CD8-positive, alpha-beta T cell (primary cell): ENCODE measurements at regions of chr1 and their contacts with region 1.

Region 1: GRCh38 chr1:212477014-212477679 is 44.4 kb downstream of the NENF start:
- DNase-seq: peak; percentile 50 to 87 (median 75)
- ATAC-seq: peak; percentile 96
- H3K4me3 ChIP-seq: no peak overlapping the region
- H3K4me3 Mint-ChIP-seq: peak overlapping the region; percentile 18
- H3K27ac ChIP-seq: no peak overlapping the region
- H3K27ac Mint-ChIP-seq: no peak overlapping the region
- H3K4me1 ChIP-seq: no peaks in the 10 kb centered on the region
- H3K4me1 Mint-ChIP-seq: peaks cover 12% of the 10 kb centered on the region
- H3K27me3 ChIP-seq: no peaks in the 10 kb centered on the region
- H3K27me3 Mint-ChIP-seq: peaks cover 4% of the 10 kb centered on the region
- CTCF ChIP-seq: peak; percentile 90

Region 2: GRCh38 chr1:212401838-212402582 is 75.1 kb before region 1 on chr1:
- CTCF ChIA-PET with region 1: no interaction called
- POLR2A ChIA-PET with region 1: no interaction called
- intact Hi-C with region 1: no loop called
- DNase-seq: no peak
- ATAC-seq: no peak
- H3K4me3 ChIP-seq: no peak overlapping the region
- H3K4me3 Mint-ChIP-seq: no peak overlapping the region
- H3K27ac ChIP-seq: no peak overlapping the region
- H3K27ac Mint-ChIP-seq: no peak overlapping the region
- H3K4me1 ChIP-seq: no peaks in the 10 kb centered on the region
- H3K4me1 Mint-ChIP-seq: peaks cover 9% of the 10 kb centered on the region
- H3K27me3 ChIP-seq: no peaks in the 10 kb centered on the region
- H3K27me3 Mint-ChIP-seq: no peaks in the 10 kb centered on the region
- CTCF ChIP-seq: no peak

Region 3: GRCh38 chr1:212488397-212489283 is 11.5 kb after region 1 on chr1:
- CTCF ChIA-PET with region 1: interaction called, 22 read pairs
- POLR2A ChIA-PET with region 1: interaction called, 3 read pairs
- intact Hi-C with region 1: no loop called
- DNase-seq: peak in 2 of 9 experiments; percentile 35 to 55
- ATAC-seq: peak; percentile 38
- H3K4me3 ChIP-seq: no peak overlapping the region
- H3K4me3 Mint-ChIP-seq: no peak overlapping the region
- H3K27ac ChIP-seq: no peak overlapping the region
- H3K27ac Mint-ChIP-seq: no peak overlapping the region
- H3K4me1 ChIP-seq: no peaks in the 10 kb centered on the region
- H3K4me1 Mint-ChIP-seq: no peaks in the 10 kb centered on the region
- H3K27me3 ChIP-seq: no peaks in the 10 kb centered on the region
- H3K27me3 Mint-ChIP-seq: no peaks in the 10 kb centered on the region
- CTCF ChIP-seq: no peak

Region 4: DNA sequence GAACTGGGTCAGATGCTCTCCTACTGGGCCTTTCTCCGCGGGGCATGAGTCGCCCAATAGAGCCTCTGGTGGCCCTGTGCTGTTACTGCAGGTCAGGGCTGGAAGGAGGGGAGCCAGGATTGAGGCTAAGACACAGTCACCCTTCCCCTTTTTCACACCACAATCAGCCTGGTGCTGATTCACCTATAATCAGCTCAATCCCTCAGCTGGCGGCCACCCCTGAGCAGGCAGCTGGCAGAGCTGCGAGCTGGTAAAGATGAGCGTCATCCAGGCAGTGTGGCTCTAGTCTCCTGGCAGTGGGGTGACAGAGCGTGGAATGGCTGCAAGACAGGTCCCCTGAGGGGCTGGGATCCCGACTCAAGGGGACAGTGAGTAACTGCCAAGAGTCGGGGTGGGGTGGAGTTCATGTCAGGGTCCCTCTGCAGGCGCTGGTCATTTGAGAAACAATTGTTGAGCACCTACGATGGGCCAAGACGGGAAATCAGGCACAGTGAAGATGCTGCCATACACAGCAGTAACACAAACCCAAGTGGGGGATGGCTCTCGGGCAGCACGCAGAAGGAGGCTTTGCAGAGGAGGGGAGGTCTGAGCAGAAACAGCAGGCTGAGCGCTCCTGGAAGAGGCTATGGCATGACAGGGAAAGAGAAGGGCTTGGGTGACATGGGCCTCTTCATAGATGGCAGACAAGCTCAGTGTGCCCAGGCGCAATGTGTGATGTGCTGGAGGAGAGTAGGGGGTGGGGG is 153.2 kb after region 1 on chr1:
- CTCF ChIA-PET with region 1: interaction called, 10 read pairs
- POLR2A ChIA-PET with region 1: no interaction called
- intact Hi-C with region 1: loop called (anchors 1 kb)
- DNase-seq: peak; percentile 33 to 75 (median 56)
- ATAC-seq: peak; percentile 99
- H3K4me3 ChIP-seq: no peak overlapping the region
- H3K4me3 Mint-ChIP-seq: no peak overlapping the region
- H3K27ac ChIP-seq: no peak overlapping the region
- H3K27ac Mint-ChIP-seq: no peak overlapping the region
- H3K4me1 ChIP-seq: peaks cover 3% of the 10 kb centered on the region
- H3K4me1 Mint-ChIP-seq: peaks cover 7% of the 10 kb centered on the region
- H3K27me3 ChIP-seq: no peaks in the 10 kb centered on the region
- H3K27me3 Mint-ChIP-seq: no peaks in the 10 kb centered on the region
- CTCF ChIP-seq: peak; percentile 88

Region 5: DNA sequence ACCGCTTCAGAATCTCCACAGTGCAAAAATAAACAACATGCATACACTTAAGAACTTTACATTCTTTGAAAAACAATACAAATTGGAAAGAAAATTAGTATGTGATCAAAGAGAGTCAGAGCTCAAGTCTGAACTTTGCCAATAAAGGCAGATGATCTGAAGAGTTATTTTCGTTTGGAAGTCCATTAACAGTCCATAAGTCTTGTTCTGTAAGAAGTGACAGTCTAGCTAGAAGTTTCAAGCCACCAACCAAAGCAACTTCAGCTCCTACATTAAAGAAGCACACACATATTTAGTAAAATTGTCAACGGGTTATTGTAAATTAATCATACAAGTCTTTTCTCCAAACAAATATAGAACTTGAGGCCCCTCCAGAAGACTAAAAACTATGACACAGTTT is 517.8 kb after region 1 on chr1:
- CTCF ChIA-PET with region 1: interaction called, 17 read pairs
- POLR2A ChIA-PET with region 1: no interaction called
- intact Hi-C with region 1: loop called in 1 of 2 experiments (anchors 1 kb)
- DNase-seq: no peak
- ATAC-seq: no peak
- H3K4me3 ChIP-seq: no peak overlapping the region
- H3K4me3 Mint-ChIP-seq: no peak overlapping the region
- H3K27ac ChIP-seq: no peak overlapping the region
- H3K27ac Mint-ChIP-seq: no peak overlapping the region
- H3K4me1 ChIP-seq: no peaks in the 10 kb centered on the region
- H3K4me1 Mint-ChIP-seq: peaks cover 3% of the 10 kb centered on the region
- H3K27me3 ChIP-seq: no peaks in the 10 kb centered on the region
- H3K27me3 Mint-ChIP-seq: no peaks in the 10 kb centered on the region
- CTCF ChIP-seq: no peak